Activated naive CD4-positive, alpha-beta T cell treated with anti-CD3 and anti-CD28 coated beads, Interleukin-2, amount 10 ng/mL, durations not matched to agents 7 days and 5 days (primary cell): ENCODE measurements at regions of chr10 and their contacts with region 1.

Region 1: GRCh38 chr10:4849555-4850242 is 23.7 kb downstream of the AKR1E2 start:
- DNase-seq: peak; percentile 93
- H3K4me3 Mint-ChIP-seq: no peak overlapping the region
- H3K27ac Mint-ChIP-seq: peak overlapping the region; percentile 31
- H3K4me1 Mint-ChIP-seq: peaks cover 12% of the 10 kb centered on the region
- H3K27me3 Mint-ChIP-seq: no peaks in the 10 kb centered on the region

Region 2: DNA sequence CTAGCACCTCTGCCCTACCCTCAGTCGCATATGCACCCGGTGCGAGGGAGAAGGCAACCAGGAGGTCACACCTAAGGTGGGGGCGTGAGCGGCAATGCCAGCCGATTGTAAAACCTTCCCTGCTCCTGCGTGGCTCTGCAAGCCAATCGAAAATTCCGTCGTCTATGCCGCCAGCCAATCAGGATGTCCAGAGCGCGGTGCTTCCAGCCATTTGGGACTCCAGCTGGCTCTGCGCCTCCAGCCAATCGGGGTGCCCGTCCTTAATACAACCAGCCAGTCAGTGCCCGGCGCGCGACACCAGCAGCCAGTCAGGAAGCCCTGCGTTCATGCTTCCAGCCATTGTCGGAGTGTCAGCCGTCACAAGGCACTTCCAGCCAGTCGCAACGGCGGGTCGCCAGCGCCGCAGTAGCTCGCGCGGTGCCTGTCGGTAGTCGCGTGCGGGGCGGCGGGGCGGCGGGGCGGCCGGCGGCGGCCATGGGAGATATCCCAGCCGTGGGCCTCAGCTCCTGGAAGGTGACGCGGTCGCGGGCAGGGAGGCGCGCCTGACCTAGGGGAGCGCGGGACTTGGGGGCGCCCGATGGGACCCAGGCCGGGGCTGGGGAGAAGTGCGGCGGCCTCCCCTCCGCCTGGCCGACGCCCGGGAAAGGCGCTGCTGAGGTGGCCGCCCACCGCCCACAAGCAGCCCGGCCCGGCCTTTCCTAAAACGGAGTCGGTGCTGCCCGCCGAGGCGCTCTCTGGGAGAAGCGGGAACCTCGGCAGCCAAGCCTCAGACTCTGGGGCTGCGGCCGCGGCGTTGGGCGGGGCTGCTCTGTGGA is 23.6 kb before region 1 on chr10 and contains the start of gene AKR1E2:
- CTCF ChIA-PET with region 1: interaction called, 10 read pairs
- DNase-seq: peak; percentile 90
- H3K4me3 Mint-ChIP-seq: peak within 1 kb of the TSS; percentile 76
- H3K27ac Mint-ChIP-seq: peak within 1 kb of the TSS; percentile 74
- H3K4me1 Mint-ChIP-seq: peaks cover 27% of the 10 kb centered on the region
- H3K27me3 Mint-ChIP-seq: peaks cover 40% of the 10 kb centered on the region

Region 3: GRCh38 chr10:4839401-4839800 is 10.3 kb before region 1 on chr10:
- CTCF ChIA-PET with region 1: interaction called, 53 read pairs
- DNase-seq: no peak
- H3K4me3 Mint-ChIP-seq: no peak overlapping the region
- H3K27ac Mint-ChIP-seq: no peak overlapping the region
- H3K4me1 Mint-ChIP-seq: peaks cover 28% of the 10 kb centered on the region
- H3K27me3 Mint-ChIP-seq: no peaks in the 10 kb centered on the region

Region 4: GRCh38 chr10:4998671-4999070 is 149.0 kb after region 1 on chr10:
- CTCF ChIA-PET with region 1: no interaction called
- DNase-seq: no peak
- H3K4me3 Mint-ChIP-seq: no peak overlapping the region
- H3K27ac Mint-ChIP-seq: no peak overlapping the region
- H3K4me1 Mint-ChIP-seq: no peaks in the 10 kb centered on the region
- H3K27me3 Mint-ChIP-seq: peaks cover 4% of the 10 kb centered on the region

Region 5: DNA sequence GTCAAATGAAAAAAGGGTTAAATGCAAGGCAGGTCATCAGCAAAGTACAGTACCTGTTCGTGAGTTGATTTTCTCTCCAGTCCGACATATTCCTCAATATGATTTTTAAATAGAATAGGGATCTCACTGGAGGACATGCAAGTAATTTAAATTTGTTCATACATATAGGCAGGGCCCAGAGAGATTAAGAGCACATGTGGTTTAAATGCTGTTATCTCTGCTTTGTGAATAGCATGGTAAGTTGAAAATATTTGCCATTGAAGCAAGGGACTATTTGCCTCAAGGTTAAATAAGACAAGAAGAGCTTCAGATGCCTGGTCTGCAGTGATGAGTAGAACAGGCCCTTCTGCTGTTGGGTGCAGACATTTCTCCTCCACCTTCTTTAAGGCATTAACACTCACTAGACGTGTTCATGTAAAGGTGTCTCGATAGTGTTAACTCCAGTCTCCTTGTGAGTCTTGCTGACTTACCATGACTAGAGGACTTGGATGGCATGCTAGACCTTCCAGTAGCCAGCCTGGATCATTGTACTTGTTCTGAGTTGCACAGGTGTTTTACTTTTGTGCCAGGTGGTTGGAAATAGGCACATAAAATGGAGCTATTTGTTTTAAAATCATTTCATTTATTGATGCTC is 229.0 kb after region 1 on chr10:
- CTCF ChIA-PET with region 1: no interaction called
- DNase-seq: no peak
- H3K4me3 Mint-ChIP-seq: no peak overlapping the region
- H3K27ac Mint-ChIP-seq: no peak overlapping the region
- H3K4me1 Mint-ChIP-seq: no peaks in the 10 kb centered on the region
- H3K27me3 Mint-ChIP-seq: no peaks in the 10 kb centered on the region

Region 6: GRCh38 chr10:5229019-5229418 is 379.3 kb after region 1 on chr10:
- CTCF ChIA-PET with region 1: no interaction called
- DNase-seq: no peak
- H3K4me3 Mint-ChIP-seq: no peak overlapping the region
- H3K27ac Mint-ChIP-seq: no peak overlapping the region
- H3K4me1 Mint-ChIP-seq: no peaks in the 10 kb centered on the region
- H3K27me3 Mint-ChIP-seq: no peaks in the 10 kb centered on the region

Region 7: GRCh38 chr10:5283305-5284158 is 433.8 kb after region 1 on chr10:
- CTCF ChIA-PET with region 1: interaction called, 58 read pairs
- DNase-seq: peak; percentile 79
- H3K4me3 Mint-ChIP-seq: no peak overlapping the region
- H3K27ac Mint-ChIP-seq: peak overlapping the region; percentile 84
- H3K4me1 Mint-ChIP-seq: peaks cover 44% of the 10 kb centered on the region
- H3K27me3 Mint-ChIP-seq: no peaks in the 10 kb centered on the region

Region 8: GRCh38 chr10:5385224-5385623 is 535.5 kb after region 1 on chr10:
- CTCF ChIA-PET with region 1: interaction called, 17 read pairs
- DNase-seq: no peak
- H3K4me3 Mint-ChIP-seq: no peak overlapping the region
- H3K27ac Mint-ChIP-seq: no peak overlapping the region
- H3K4me1 Mint-ChIP-seq: no peaks in the 10 kb centered on the region
- H3K27me3 Mint-ChIP-seq: no peaks in the 10 kb centered on the region

Region 9: GRCh38 chr10:5623081-5623748 is 773.5 kb after region 1 on chr10:
- CTCF ChIA-PET with region 1: interaction called, 18 read pairs
- DNase-seq: peak; percentile 90
- H3K4me3 Mint-ChIP-seq: no peak overlapping the region
- H3K27ac Mint-ChIP-seq: no peak overlapping the region
- H3K4me1 Mint-ChIP-seq: peaks cover 2% of the 10 kb centered on the region
- H3K27me3 Mint-ChIP-seq: peaks cover 29% of the 10 kb centered on the region